ENCODE measurements at regions of chr10 and their contacts with region 1.

Region 1: DNA sequence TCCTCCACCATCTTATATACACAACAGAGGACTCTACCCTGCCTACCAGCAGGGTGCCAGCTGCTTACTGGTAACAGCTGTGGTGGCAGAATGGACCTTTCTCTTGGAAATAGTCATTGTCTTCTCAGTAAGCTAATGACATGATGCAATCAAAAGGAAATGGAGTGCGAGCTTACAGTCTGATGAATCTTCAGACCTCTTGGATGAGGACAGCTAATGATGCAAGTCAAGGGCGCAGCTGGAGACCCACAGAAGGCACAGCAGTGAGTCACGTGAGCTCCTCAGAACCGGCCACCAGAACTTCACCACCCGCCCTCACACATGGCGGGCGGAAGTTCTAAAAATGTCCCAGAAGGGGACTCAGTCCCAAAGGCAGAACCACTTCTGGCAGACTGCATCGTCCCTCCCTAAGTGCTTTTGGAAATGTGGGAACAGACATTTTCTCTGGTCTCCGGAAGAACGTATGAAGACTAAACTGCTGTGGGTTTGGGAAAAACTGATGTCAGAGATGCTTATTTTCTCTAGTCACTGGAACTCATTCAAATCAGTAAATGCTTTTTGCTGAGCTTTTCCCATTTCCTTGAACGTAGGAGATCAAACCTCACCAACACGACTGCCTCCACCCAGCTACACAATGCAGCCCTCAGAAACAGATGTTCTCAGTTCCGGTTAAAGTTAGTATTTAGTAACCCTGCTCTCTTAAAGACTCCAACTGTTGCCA is 96.4 kb downstream of the FAS start:
- DNase-seq: peak; percentile 50
- H3K4me3 Mint-ChIP-seq: no peak overlapping the region
- H3K27ac Mint-ChIP-seq: no peak overlapping the region
- H3K4me1 Mint-ChIP-seq: peaks cover 8% of the 10 kb centered on the region
- H3K27me3 Mint-ChIP-seq: no peaks in the 10 kb centered on the region

Region 2: DNA sequence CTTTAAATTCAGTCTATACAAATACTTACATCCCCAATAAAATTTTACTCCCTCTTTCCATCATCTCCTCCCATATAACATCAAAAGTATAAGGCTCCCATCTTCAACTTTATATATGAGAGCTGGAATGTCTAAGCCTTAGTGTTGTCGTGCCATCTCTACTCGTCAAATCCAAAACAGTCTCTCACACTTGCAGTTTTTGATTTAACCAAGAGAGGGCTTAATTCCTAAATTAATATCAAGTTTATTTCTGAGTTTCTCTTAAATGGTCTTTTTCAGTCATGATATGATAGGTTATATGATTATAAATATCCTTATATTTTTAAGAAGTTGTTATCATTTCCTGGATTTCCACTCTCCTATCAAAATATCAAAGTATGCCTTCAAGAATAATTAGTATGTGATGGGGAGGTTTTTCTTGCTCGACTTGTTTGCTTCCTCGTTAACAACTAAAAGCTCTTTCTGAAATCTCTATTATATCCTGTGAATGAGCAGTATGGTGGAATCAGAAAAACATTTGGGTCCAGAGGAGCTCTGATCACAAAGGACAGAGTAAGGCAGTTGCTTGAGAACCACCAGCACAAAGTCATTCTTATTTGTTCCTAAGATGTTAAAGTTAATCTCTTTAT is 393.5 kb before region 1 on chr10:
- CTCF ChIA-PET with region 1: no interaction called
- POLR2A ChIA-PET with region 1: no interaction called
- intact Hi-C with region 1: no loop called
- DNase-seq: no peak
- H3K4me3 Mint-ChIP-seq: no peak overlapping the region
- H3K27ac Mint-ChIP-seq: no peak overlapping the region
- H3K4me1 Mint-ChIP-seq: no peaks in the 10 kb centered on the region
- H3K27me3 Mint-ChIP-seq: peaks cover 11% of the 10 kb centered on the region

Region 3: DNA sequence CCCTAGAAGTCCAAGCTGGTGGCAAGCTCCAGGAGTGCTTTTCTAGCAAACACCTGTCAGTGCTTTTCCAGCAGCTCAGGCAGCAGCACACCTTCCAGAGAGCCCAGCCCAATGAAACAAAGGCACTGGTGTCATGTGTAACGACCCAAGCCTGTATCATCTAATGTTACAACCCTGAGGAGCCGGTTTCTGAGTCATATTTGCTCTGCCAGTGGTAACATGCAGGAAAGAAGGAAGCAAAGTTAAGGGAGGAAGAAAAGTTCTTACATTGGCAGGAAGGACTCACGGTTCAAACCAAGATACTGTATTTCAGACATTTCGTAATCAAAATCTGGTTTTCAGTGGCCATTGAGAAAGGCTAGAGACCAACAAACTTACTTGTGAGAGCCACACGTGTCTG is 235.3 kb before region 1 on chr10 and contains the start of gene ANKRD22:
- CTCF ChIA-PET with region 1: no interaction called
- POLR2A ChIA-PET with region 1: no interaction called
- intact Hi-C with region 1: loop called (anchors 1 kb)
- DNase-seq: no peak
- H3K4me3 Mint-ChIP-seq: no peak within 1 kb of the TSS
- H3K27ac Mint-ChIP-seq: no peak within 1 kb of the TSS
- H3K4me1 Mint-ChIP-seq: peaks cover 20% of the 10 kb centered on the region
- H3K27me3 Mint-ChIP-seq: peaks cover 6% of the 10 kb centered on the region
- total RNA-seq, gene ANKRD22: 0.12 to 0.24 TPM

Region 4: DNA sequence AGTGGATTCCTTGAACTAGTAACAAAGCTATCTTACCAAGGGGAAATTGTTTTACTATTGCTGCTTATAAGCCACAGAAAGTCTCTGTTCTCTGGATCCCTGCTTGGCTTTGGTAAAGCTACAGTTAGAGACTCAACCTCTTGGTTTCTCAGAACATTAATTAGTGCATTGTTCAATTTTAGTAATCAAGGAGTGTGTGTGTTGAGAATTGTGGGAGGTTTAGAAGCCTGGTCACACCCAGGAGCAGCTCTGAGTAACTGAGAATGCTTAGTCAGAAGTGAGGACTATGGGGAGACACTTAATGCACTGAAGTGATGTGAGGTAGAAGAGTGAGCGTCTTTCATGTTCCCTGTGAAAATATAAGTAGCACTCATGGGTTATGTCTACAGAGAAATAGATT is 126.2 kb before region 1 on chr10:
- CTCF ChIA-PET with region 1: no interaction called
- POLR2A ChIA-PET with region 1: no interaction called
- intact Hi-C with region 1: loop called (anchors 1 kb)
- DNase-seq: peak; percentile 46
- H3K4me3 Mint-ChIP-seq: no peak overlapping the region
- H3K27ac Mint-ChIP-seq: peak overlapping the region; percentile 73
- H3K4me1 Mint-ChIP-seq: peaks cover 29% of the 10 kb centered on the region
- H3K27me3 Mint-ChIP-seq: no peaks in the 10 kb centered on the region

Region 5: DNA sequence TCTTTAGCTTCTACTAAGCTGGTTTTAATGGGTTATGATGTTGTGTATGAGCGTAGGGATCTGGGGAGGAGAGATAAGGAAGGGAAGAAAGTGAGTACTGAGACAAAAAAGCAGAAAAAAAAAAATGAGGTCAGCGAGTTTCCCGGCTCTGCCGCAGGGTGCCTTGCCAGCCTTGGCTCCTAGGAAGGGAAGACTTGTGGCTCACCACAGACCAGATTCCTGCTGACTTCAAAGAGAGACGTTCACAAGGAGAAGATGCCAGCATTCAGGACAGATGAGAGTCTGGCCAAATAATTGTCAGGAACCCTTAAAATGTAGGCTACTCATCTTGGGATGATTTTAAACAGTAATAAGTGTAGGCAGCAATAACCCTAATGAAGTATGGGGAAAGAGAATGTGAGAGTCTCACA is 107.8 kb before region 1 on chr10:
- CTCF ChIA-PET with region 1: no interaction called
- POLR2A ChIA-PET with region 1: no interaction called
- intact Hi-C with region 1: no loop called
- DNase-seq: no peak
- H3K4me3 Mint-ChIP-seq: no peak overlapping the region
- H3K27ac Mint-ChIP-seq: no peak overlapping the region
- H3K4me1 Mint-ChIP-seq: peaks cover 32% of the 10 kb centered on the region
- H3K27me3 Mint-ChIP-seq: no peaks in the 10 kb centered on the region

Region 6: DNA sequence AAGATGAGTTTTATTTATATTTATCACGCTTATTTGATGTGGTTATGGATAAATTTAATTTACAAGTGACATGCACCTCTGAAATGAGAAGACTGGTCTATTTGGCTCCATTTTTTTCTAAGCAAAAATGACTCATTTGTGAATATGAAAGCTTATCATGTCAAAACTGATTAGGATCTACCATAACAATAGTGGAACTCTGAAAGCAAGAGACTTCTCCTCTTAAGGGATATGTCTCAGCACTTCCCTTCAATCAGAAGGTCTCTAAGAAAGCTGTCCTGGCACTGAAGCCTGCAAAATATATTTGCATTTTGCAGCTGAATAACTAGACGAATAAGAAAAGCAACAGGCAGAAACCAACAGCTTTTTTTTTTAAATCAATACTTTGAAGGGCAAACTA is 83.6 kb before region 1 on chr10:
- CTCF ChIA-PET with region 1: no interaction called
- POLR2A ChIA-PET with region 1: no interaction called
- intact Hi-C with region 1: loop called (anchors 1 kb)
- DNase-seq: no peak
- H3K4me3 Mint-ChIP-seq: no peak overlapping the region
- H3K27ac Mint-ChIP-seq: peak overlapping the region; percentile 83
- H3K4me1 Mint-ChIP-seq: peaks cover 66% of the 10 kb centered on the region
- H3K27me3 Mint-ChIP-seq: no peaks in the 10 kb centered on the region

Region 7: GRCh38 chr10:89163265-89163995 is 76.5 kb after region 1 on chr10:
- CTCF ChIA-PET with region 1: no interaction called
- POLR2A ChIA-PET with region 1: no interaction called
- intact Hi-C with region 1: loop called (anchors 1 kb)
- DNase-seq: peak; percentile 76
- H3K4me3 Mint-ChIP-seq: peak overlapping the region; percentile 10
- H3K27ac Mint-ChIP-seq: peak overlapping the region; percentile 35
- H3K4me1 Mint-ChIP-seq: peaks cover 42% of the 10 kb centered on the region
- H3K27me3 Mint-ChIP-seq: peaks cover 15% of the 10 kb centered on the region

Region 8: DNA sequence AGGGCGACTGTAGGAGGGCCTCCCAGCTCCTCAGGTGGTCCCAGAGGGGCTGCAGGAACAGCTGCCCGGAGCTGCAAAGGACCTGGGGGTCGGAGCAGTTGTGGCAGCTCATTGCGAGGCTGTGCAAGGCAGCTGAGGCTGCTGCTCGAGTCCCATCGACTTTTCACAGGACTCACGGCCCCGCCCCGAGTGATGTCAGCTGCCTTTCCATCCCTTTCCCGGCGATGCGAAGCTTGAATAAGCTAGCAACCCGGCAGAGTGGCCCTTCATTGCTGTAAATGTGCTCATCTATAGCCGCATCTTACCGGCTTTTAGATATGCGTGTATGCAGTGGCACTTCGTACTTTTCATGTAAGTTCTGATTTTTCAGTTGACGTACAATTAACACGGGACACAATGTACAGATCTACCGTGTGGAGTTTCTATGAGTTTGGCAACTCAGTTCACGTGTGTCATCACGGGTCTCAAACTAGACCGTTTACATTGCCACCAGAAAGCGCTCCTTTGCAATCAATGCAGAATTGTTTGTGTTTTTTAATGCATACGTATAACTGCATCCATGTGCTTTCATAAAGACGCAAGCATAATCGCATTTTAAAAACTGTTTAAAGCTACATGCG is 120.3 kb after region 1 on chr10 and contains the start of gene CH25H:
- CTCF ChIA-PET with region 1: interaction called, 3 read pairs
- POLR2A ChIA-PET with region 1: no interaction called
- intact Hi-C with region 1: loop called (anchors 2 kb)
- DNase-seq: peak; percentile 71
- H3K4me3 Mint-ChIP-seq: peak within 1 kb of the TSS; percentile 64
- H3K27ac Mint-ChIP-seq: no peak within 1 kb of the TSS
- H3K4me1 Mint-ChIP-seq: peaks cover 11% of the 10 kb centered on the region
- H3K27me3 Mint-ChIP-seq: peaks cover 29% of the 10 kb centered on the region
- total RNA-seq, gene CH25H: 0.12 TPM in 1 of 2 experiments, not detected in the other